T-cell (primary cell): ENCODE measurements at regions of chr18 and their contacts with region 1.

Region 1: GRCh38 chr18:9209279-9209678 is 72.7 kb downstream of the ANKRD12 start:
- DNase-seq: no peak
- ATAC-seq: no peak
- H3K4me3 ChIP-seq: no peak overlapping the region
- H3K4me3 Mint-ChIP-seq: no peak overlapping the region
- H3K27ac ChIP-seq: no peak overlapping the region
- H3K27ac Mint-ChIP-seq: no peak overlapping the region
- H3K4me1 ChIP-seq: no peaks in the 10 kb centered on the region
- H3K4me1 Mint-ChIP-seq: peaks cover 20 to 25% (median 21%) of the 10 kb centered on the region in 3 donors
- H3K27me3 ChIP-seq: no peaks in the 10 kb centered on the region
- H3K27me3 Mint-ChIP-seq: no peaks in the 10 kb centered on the region

Region 2: DNA sequence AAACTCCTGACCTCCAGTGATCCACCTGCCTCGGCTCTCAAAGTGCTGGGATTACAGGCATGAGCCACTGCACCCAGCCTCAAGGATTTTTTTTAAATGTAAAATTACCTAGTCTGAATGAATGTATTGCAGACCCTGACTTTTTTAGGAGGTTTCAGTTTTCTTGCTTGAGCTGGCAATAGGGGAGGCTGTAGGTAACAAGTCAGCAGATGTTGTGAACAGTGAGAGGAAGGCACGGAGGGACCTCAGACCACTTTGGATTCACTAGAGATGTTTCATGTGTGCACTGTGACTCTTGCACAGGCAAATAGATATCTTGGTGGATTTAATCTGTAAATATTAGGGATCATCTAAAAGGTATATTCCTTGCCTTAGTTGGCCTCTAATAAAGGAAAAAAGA is 100.4 kb before region 1 on chr18:
- CTCF ChIA-PET with region 1: interaction called in 1 of 2 experiments, 3 read pairs
- POLR2A ChIA-PET with region 1: interaction called in 1 of 2 experiments, 11 read pairs
- DNase-seq: no peak
- ATAC-seq: peak in 1 of 4 experiments; percentile 21
- H3K4me3 ChIP-seq: no peak overlapping the region
- H3K4me3 Mint-ChIP-seq: peak overlapping the region; percentile 55 to 91 (median 62)
- H3K27ac ChIP-seq: peak overlapping the region; percentile 42
- H3K27ac Mint-ChIP-seq: peak overlapping the region; percentile 82 to 89
- H3K4me1 ChIP-seq: peaks cover 48 to 56% of the 10 kb centered on the region in 2 experiments
- H3K4me1 Mint-ChIP-seq: peaks cover 96 to 100% (median 96%) of the 10 kb centered on the region in 3 donors
- H3K27me3 ChIP-seq: no peaks in the 10 kb centered on the region
- H3K27me3 Mint-ChIP-seq: no peaks in the 10 kb centered on the region

Region 3: GRCh38 chr18:9136315-9137155 is 72.7 kb before region 1 on chr18 and contains the start of gene ANKRD12:
- CTCF ChIA-PET with region 1: no interaction called
- POLR2A ChIA-PET with region 1: no interaction called
- DNase-seq: peak; percentile 91 to 99 (median 96)
- ATAC-seq: peak; percentile 74 to 78 (median 77)
- H3K4me3 ChIP-seq: peak within 1 kb of the TSS; percentile 81 to 94
- H3K4me3 Mint-ChIP-seq: peak within 1 kb of the TSS; percentile 93 to 98 (median 96)
- H3K27ac ChIP-seq: peak within 1 kb of the TSS; percentile 95
- H3K27ac Mint-ChIP-seq: peak within 1 kb of the TSS; percentile 99
- H3K4me1 ChIP-seq: peaks cover 19 to 28% of the 10 kb centered on the region in 2 experiments
- H3K4me1 Mint-ChIP-seq: peaks cover 69 to 72% (median 72%) of the 10 kb centered on the region in 3 donors
- H3K27me3 ChIP-seq: no peaks in the 10 kb centered on the region
- H3K27me3 Mint-ChIP-seq: no peaks in the 10 kb centered on the region
- total RNA-seq, gene ANKRD12: 183 to 211 (median 199) TPM